Activated CD4-positive, alpha-beta T cell treated with anti-CD3 and anti-CD28 coated beads, Interleukin-2, amount 10 ng/mL, durations not matched to agents 24 days and 14 days (primary cell): ENCODE measurements at regions of chr1 and their contacts with region 1.

Region 1: DNA sequence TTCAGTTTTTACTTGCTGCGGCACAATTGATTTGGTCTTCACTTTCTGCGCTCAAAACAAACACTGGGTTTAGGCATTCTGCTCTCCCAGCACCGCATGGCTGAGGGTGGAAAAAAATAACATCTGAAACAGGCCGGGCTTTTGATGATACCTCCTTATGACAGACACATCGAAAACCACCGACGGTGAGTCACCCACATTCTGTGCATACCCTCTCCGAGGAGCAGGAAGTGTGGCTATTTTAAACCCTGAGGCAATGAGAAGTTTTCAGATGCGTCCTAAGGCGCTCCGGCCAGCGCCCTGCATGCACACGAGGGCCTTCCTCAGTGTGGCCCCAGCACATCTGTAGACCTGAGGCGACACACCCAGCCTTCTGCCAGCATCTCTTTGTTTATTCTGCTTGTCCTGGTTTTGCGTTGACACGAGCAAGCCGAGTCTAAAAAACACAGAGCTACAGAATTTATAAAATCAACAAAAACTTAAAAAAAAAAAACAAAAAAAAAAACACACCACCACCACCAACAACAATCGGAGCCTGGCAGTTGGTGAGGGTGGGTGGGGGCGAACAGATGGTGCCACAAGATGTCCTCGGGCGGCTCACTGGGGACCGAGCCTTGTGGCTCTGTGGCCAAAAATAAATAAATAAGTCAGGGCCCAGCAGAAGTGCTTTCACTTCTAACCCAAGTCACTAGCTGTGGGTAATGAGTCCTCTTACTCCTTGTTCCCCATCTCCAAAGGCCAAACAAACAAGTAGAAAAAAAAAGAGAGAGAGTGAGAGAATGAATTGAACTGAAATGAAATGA is 162.6 kb upstream of the IRF2BP2 start:
- DNase-seq: peak; percentile 95
- H3K4me3 Mint-ChIP-seq: peak overlapping the region; percentile 65
- H3K27ac Mint-ChIP-seq: peak overlapping the region; percentile 95
- H3K4me1 Mint-ChIP-seq: peaks cover 54% of the 10 kb centered on the region
- H3K27me3 Mint-ChIP-seq: no peaks in the 10 kb centered on the region

Region 2: DNA sequence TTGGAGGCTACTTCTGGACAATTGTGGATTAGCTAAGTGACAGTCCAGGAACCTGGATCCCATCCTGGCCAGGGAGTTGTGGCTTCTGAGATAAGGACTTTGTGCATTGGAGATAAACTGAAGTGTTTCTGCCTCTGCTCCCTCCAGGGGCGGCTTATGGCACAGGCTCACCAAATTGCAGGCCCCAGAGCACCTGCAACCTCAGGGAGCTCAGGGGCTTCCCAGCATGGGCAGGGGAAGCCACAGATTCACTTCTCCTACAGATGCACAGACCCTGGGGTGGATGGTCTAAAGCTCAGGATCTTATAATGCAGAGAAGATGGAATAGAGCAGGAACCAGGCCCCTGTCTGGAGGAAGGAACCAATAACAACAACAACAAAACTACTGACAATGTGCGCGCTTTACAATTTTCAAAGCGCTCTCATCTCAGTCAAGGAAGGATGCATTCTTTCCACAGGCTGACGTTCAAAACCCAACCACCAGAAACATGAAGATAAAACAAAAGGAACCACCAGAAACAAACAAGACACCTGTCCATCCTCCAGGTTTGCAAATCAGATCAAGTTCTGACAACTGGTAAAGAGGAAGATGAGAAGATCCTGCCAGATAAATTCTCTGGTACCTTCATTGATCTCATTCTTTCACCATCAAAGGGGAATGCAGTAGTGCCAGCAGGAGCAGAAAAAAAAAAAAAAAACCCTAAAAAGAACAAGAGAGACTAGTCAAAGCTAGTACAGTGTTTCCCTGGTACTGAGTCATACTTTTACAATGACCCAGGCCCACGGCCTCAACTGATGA is 41.6 kb before region 1 on chr1:
- intact Hi-C with region 1: loop called (anchors 1 kb)
- DNase-seq: peak; percentile 86
- H3K4me3 Mint-ChIP-seq: peak overlapping the region; percentile 68
- H3K27ac Mint-ChIP-seq: peak overlapping the region; percentile 96
- H3K4me1 Mint-ChIP-seq: peaks cover 77% of the 10 kb centered on the region
- H3K27me3 Mint-ChIP-seq: no peaks in the 10 kb centered on the region

Region 3: GRCh38 chr1:234823191-234824176 is 50.9 kb after region 1 on chr1:
- intact Hi-C with region 1: no loop called
- DNase-seq: no peak
- H3K4me3 Mint-ChIP-seq: no peak overlapping the region
- H3K27ac Mint-ChIP-seq: no peak overlapping the region
- H3K4me1 Mint-ChIP-seq: peaks cover 13% of the 10 kb centered on the region
- H3K27me3 Mint-ChIP-seq: no peaks in the 10 kb centered on the region

Region 4: DNA sequence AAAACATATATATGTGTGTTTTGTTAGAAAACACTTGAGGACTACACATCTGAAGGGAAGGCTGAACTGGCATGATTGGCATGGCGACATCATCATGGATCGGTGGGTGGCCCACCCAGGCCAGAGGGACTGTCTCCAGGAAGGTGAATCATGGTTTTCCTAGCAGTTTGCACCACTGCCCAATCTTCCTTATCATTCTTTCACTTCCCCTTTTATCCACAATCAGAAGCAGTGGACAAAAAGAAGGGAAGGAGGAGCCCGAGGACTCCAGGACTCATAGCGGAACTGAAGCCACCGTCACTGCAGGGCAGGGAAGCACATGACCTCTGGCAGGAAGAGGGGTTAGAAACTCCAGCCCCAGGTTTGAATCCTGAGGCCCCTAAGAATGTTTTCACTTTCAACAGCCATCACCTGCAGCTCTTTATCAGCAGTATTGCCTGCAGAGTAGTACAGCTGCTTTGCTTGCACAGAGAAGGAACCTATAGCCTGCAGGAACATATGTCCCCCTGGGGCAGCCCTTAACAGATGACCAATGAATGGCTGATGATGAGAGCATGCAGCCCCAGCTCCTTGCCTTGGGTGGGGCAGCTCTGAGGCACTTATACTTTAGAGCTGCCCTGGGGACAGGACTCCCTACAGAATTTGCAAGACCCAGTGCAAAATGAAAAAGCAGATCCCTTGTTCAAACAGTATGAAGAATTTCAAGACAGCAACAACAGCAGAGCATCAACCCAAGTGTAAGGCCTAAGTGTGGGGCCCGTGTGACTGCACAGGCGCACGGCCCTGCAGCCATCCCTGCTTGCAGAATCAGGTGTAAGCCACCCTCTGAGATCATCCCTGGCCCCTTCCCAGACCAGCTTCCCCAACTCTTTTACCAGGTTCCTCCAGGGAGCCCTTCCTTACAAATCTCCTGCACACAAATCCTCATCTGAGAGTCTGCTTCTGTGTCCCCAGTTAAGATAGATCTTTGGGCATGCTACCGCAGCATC is 79.2 kb after region 1 on chr1:
- intact Hi-C with region 1: no loop called
- DNase-seq: peak; percentile 74
- H3K4me3 Mint-ChIP-seq: no peak overlapping the region
- H3K27ac Mint-ChIP-seq: peak overlapping the region; percentile 64
- H3K4me1 Mint-ChIP-seq: peaks cover 61% of the 10 kb centered on the region
- H3K27me3 Mint-ChIP-seq: no peaks in the 10 kb centered on the region

Region 5: GRCh38 chr1:234875953-234876855 is 103.7 kb after region 1 on chr1:
- intact Hi-C with region 1: loop called (anchors 5 kb)
- DNase-seq: no peak
- H3K4me3 Mint-ChIP-seq: peak overlapping the region; percentile 3
- H3K27ac Mint-ChIP-seq: peak overlapping the region; percentile 92
- H3K4me1 Mint-ChIP-seq: peaks cover 51% of the 10 kb centered on the region
- H3K27me3 Mint-ChIP-seq: no peaks in the 10 kb centered on the region

Region 6: DNA sequence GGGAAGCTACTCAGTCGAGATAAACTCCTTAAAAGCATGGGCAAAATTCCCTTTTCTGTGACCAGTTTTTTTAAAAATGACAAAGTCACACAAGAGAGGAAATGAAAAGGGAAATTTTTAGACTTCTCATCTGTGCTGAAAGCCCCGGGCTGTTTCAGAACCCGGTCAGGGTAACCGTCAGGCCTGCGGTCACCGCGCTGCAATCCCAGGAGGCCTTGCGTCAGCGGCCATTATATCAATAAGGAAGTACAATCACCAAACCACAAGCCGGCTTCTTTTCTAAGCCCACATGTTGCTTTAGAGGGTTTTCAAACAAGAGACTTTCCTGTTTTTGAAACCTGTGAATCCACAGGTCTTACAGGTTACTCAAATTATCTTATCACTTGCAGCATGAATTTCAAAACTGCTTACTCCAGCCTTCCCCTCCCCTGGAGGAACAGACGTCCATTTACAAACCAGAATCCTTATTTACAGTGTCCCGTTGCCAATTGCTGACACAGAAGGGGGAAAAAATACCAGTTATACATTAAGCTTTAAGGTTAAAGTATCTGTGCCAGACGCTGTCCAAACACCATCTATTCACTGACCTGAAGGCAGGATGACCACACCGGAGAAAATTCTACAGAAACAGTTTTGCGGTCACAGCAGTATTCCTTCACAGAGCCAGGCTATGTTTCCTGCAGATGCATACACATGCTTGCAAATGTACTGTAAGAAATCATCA is 190.8 kb after region 1 on chr1:
- intact Hi-C with region 1: loop called (anchors 1 kb)
- DNase-seq: peak; percentile 96
- H3K4me3 Mint-ChIP-seq: peak overlapping the region; percentile 79
- H3K27ac Mint-ChIP-seq: peak overlapping the region; percentile 97
- H3K4me1 Mint-ChIP-seq: peaks cover 69% of the 10 kb centered on the region
- H3K27me3 Mint-ChIP-seq: no peaks in the 10 kb centered on the region